Left ventricle myocardium inferior (tissue), 1 donor: ENCODE measurements at regions of chr12 and their contacts with region 1.

Region 1: DNA sequence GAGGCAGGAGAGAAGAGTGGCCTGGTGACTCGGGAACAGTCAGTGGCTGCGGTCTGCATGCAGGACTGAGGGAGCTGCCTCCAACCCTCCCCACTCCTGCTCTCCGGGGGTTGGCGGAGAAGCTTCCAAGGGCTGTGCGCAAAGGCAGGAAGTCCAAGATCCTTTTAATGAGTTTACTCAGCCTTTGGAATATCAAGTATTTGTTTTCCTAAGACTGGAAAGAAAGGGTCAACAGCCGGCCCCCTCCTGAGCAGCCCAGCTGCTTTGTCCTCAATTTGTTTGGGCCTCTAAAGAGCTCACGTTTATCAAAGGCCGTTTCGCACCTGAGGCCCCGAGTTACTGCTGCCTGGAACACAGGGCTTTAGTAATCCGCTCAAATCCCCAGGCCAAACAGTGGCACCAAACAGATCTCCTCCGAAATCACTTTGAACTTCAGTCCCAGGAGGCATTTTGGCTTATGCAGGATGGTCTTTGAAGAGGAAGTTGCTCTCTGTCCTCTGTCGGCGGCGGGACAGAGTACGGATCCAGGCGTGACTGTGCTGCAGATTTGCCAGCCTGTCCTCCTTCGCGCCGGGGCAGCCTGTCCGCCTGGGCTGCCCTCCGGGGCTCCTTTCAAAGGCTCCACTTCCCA is 117.2 kb upstream of the FZD10 start:
- DNase-seq: no peak
- H3K4me3 ChIP-seq: no peak overlapping the region
- H3K27ac ChIP-seq: no peak overlapping the region
- H3K4me1 ChIP-seq: no peaks in the 10 kb centered on the region
- H3K27me3 ChIP-seq: peaks cover 93% of the 10 kb centered on the region
- CTCF ChIP-seq: no peak

Region 2: DNA sequence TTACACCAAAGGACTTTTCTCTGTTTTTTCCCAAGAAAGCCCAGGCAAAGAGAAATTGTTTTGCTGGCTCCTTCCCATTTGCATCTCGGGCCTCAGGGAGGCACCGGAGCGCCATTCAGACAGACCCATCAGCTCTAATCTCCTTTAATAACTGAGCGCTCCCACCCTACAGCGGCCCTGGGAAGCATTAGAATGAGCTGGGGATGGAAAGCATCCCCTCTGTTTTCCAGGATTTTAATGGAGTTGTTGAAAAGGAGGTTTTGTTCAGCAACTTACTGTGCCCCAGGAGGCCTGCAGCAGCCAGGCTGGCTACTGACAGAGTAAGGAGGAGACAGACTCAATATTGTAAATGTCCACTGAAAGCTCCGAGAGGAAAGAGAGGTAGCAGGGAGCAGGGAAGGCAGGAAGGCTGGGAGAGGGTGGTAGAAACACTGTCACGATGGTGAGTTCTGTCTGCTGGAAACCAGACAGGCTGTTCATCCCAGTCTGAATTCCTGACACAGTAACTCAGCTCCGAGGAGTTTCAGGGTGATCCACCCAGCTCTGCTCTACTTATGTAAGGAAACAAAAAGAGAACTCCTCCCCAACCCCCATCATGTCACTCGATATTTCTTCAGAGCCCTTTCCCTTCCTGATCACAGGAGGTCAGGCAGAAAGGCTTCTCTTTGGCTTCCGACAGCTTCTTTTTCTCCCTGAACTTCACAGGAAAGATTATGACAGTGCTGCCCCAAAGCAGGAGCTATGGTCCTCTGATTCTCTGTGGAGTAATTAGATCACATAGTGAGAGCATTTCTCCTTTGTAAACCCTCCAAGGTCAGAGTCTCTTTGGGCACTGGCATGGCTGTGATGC is 78.7 kb before region 1 on chr12:
- intact Hi-C with region 1: no loop called
- DNase-seq: no peak
- H3K4me3 ChIP-seq: no peak overlapping the region
- H3K27ac ChIP-seq: no peak overlapping the region
- H3K4me1 ChIP-seq: no peaks in the 10 kb centered on the region
- H3K27me3 ChIP-seq: peaks cover 50% of the 10 kb centered on the region
- CTCF ChIP-seq: no peak

Region 3: DNA sequence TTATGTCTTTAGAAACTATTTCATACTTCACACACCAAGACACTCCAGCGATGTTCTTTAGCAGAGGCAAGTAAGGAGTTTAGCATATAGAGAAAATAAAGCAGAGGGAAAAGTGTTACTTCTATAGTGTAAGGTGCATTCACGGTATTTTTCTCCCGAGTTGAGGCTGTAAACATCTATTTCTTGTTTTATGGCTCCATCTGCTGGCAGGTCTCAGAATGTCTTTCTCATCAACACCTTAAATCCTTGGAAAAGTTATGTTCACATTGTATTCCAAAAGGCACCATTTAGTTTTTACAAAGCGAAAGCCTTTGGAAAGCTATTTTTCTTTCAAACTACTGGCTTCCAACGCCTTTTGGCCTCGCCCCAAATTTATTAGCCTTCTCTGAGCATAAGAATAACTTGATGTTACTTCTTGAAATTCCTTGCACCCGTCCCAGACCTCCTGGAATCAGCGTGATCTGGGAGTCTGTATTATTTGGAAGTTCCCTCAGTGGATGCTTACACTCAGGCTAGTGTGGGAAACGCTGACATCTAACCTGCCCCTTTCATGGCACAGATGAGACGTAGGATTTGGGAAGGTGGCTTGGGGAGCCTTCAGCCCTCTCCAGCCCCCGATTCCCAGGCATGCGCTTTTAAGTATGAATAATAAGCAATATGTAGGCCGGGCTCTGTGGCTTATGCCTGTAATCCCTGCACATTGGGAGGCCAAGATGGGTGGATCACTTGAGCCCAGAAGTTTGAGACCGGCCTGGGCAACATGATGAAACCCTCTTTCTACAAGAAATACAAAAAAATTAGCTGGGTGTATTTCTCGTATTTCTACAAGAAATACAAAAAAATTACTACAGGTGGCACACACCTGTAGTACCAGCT is 290.6 kb after region 1 on chr12:
- intact Hi-C with region 1: loop called (anchors 5 kb)
- DNase-seq: no peak
- H3K4me3 ChIP-seq: no peak overlapping the region
- H3K27ac ChIP-seq: no peak overlapping the region
- H3K4me1 ChIP-seq: peaks cover 7% of the 10 kb centered on the region
- H3K27me3 ChIP-seq: peaks cover 87% of the 10 kb centered on the region
- CTCF ChIP-seq: peak; percentile 77